Activated T-helper 1 cell treated with anti-CD3 and anti-CD28 coated beads, Interleukin-12 subunit alpha, Interleukin-12 subunit beta, Interleukin-2, Interleukin-4 antibody, amounts not matched to agents 30 ng/mL and 10 ng/mL and 1 ng/mL, durations not matched to agents 14 hours and 24 hours and 36 hours (primary cell): ENCODE measurements at regions of chr9 and their contacts with region 1.

Region 1: DNA sequence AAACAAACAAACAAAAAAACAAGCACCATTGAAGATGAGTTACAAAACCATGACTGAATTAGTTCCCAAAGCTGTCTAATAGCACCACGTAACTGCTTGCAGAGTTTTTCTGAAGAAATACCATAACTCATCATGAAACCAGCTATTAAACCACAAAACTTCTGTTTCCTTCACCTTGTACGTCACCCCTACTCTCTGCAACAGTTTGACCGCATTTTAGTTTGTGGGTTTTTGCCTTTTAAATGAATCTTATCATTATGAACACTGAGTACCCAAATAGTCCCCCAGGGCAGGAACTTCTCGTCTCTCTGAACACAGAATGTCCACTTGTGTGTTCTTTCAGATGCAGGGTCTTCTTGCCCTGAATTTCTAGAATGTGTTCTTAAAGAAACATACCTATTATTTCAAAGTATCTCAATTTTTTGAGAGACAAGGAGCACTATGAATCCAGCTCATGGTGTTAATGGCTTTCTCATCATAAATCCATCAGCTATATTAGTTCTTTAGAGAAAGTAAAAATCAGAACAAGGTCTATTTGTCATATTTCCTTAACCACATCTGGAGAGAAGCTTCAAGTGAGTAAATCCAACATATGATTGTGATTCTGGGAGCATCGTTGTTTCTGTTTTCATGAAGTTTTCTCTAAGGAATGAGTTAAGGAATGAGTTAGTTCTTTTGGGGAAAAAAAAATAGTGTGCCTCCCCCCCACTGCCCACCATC is 210.6 kb downstream of the AUH start:
- DNase-seq: peak; percentile 70
- H3K4me3 Mint-ChIP-seq: peak overlapping the region; percentile 13
- H3K27ac Mint-ChIP-seq: peak overlapping the region; percentile 94
- H3K4me1 Mint-ChIP-seq: peaks cover 95% of the 10 kb centered on the region
- H3K27me3 Mint-ChIP-seq: no peaks in the 10 kb centered on the region

Region 2: DNA sequence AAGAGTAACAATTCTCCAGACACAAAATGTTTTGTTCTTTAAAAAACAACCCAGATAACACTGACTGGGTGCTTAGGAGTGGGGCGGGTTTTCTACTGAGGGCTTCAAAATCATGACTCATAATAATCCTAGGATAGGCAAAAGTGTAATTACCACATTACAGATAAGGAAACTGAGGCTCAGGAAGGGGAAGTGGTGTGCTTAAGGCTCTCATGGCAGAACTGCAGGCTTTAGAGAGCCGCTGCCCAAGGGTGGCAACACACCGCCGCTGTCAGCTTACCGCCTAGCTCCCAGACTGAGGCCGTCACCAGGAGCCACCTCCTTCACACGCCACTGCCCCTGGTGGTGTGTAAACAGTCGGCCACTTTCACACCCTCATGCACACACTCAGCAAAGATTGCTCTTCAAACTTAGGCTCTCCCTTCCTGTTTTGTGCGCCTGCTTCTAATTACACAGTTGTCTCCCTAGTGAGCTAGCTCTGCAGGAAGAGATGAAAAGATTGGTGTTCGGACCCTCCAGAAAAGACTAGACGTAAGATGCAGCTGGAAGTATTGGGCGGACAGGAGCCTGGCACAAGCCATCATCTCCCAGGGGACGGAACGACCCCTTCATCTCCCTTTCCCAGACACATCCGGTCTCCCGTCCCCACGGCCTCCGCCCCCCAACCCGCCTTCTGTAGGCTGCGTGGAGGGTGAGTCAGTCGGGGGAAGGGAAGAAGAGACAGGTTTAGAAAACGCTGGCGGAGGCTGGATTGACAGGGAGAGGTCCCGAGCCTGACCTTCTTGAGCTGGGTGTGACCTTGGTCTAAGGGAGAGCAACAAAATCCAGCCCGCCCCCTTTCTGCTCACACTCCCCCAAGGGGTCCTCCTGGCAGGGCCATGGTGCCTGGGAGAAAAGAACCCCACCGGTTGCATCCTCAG is 186.8 kb before region 1 on chr9:
- intact Hi-C with region 1: loop called (anchors 5 kb)
- DNase-seq: no peak
- H3K4me3 Mint-ChIP-seq: no peak overlapping the region
- H3K27ac Mint-ChIP-seq: no peak overlapping the region
- H3K4me1 Mint-ChIP-seq: peaks cover 46% of the 10 kb centered on the region
- H3K27me3 Mint-ChIP-seq: peaks cover 9% of the 10 kb centered on the region

Region 3: DNA sequence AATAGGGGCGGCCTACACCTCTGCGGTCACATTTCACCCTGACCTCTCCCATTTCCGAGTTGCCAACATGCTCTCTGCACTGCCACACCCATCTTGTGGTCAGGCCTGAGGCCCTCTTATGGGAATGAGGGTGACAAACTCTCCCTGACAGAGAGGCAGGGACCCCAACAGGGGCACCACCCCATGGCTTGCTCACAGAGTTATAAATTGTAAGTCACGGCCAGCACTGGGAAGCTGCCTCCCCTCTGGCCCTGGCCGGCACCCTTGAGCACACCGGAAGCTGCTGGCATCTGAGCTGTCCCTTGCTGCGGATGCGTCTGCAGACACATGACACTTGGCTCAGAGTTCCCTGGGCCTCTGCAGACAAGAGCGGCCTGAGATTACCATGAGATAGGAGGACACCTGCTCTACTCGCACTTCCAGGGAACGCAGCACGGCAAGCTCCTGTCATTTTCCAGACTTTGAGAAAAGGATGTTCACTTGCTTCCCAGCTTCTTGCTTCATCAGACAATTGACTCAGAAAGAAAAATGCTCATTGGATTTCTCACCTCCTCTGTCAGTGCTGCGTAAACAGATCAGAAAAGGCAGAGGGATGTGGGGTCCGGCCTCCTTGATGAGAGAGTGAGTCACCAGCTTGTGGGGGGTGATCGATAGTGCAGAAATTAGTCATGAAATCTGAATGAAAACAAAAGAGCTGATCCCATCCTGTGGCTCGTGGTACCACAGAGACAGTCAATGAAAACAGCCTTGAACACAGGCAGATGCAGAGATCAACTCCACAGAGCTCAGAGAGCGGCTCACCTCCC is 79.8 kb before region 1 on chr9:
- intact Hi-C with region 1: loop called (anchors 1 kb)
- DNase-seq: peak; percentile 35
- H3K4me3 Mint-ChIP-seq: peak overlapping the region; percentile 68
- H3K27ac Mint-ChIP-seq: peak overlapping the region; percentile 96
- H3K4me1 Mint-ChIP-seq: peaks cover 17% of the 10 kb centered on the region
- H3K27me3 Mint-ChIP-seq: peaks cover 2% of the 10 kb centered on the region

Region 4: DNA sequence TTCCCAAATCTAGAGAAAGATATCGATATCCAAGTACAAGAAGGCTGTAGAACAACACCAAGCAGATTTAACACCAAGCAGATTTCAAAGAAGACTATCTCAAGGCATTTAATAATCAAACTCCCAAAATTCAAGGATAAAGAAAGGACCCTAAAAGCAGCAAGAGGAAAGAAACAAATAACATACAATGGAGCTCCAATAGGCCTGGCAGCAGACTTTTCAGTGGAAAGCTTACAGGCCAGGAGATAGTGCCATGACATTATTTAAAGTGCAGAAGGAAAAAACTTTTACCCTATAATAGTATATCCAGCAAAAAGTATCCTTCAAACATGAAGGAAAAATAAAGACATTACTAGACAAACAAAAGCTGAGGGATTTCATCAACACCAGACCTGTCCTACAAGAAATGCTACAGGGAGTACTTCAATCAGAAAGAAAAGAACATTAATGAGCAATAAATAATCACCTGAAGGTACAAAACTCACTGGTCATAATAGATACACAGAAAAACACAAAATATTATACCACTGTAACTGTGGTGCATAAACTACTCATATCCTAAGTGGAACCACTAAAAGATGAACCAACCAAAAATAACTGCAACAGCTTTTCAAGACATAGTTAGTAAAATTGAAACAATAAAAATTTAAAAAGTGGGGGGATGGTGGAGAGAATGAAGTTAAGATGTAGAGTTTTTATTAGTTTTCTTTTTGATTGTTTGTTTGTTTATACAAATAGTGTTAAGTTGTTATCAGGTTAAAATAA is 56.7 kb before region 1 on chr9:
- intact Hi-C with region 1: no loop called
- DNase-seq: no peak
- H3K4me3 Mint-ChIP-seq: no peak overlapping the region
- H3K27ac Mint-ChIP-seq: peak overlapping the region; percentile 46
- H3K4me1 Mint-ChIP-seq: peaks cover 54% of the 10 kb centered on the region
- H3K27me3 Mint-ChIP-seq: peaks cover 2% of the 10 kb centered on the region

Region 5: GRCh38 chr9:91164724-91165520 is 13.8 kb after region 1 on chr9:
- intact Hi-C with region 1: loop called (anchors 1 kb)
- DNase-seq: peak; percentile 74
- H3K4me3 Mint-ChIP-seq: peak overlapping the region; percentile 82
- H3K27ac Mint-ChIP-seq: peak overlapping the region; percentile 98
- H3K4me1 Mint-ChIP-seq: peaks cover 62% of the 10 kb centered on the region
- H3K27me3 Mint-ChIP-seq: no peaks in the 10 kb centered on the region

Region 6: DNA sequence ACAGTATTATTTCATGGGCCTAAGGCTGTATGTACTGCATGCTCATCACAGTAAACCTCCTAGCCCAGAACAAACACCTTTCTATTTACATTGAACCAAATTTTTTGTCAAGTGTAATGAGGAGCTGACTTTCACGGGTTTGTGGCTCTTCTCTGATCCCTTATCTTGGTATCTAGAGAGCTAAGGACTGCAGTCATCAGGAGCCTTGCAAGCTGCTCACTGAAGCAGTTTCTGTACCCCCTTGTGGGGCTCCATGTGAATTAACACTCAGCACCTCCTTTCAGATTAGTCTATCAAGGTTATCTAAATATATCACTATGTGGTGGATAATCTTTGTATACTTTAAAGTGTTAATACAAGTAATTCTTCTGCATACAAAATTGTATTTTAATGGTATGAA is 102.3 kb after region 1 on chr9:
- intact Hi-C with region 1: loop called (anchors 1 kb)
- DNase-seq: peak; percentile 51
- H3K4me3 Mint-ChIP-seq: no peak overlapping the region
- H3K27ac Mint-ChIP-seq: no peak overlapping the region
- H3K4me1 Mint-ChIP-seq: peaks cover 62% of the 10 kb centered on the region
- H3K27me3 Mint-ChIP-seq: no peaks in the 10 kb centered on the region

Region 7: DNA sequence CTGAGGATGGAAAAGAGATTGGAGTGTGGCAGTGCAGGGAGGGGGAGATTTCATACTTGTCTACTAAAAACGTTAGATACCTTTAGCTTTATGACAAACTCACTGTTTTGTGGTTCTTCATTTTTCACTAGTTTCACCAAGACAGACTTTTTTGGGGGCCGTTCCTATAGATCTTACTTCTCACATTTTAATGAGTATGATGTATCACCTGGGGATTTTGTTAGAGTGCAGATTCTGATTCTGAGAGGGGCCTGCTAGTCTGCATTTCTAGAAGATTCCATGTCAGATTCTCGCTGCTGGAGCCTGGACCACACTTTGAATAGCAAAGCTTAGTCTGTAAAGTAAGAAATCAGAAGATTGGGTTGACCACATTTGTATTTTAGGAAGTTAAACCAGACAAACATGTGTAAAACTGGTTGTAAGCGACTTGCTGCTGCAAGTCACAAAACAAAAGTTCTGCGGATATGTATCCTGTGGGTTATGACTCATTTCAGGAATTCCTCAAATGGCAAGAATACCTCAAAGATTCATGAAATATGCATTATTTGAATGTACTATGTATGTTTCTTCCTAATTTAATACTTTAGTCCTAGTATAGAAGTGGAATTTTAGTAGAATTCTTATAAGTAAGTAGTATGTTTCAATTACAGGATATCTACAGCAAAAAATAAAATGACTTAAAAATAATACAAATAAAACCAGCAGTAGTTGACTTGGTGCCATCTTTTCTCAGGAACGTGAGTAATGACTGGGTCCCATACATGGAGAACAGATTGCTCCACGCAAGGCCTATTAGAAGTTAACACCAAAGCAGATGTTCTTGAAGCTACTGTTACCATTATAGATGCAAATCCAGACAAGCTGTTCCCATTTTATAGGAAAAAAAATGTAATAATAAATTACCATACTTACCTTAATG is 244.7 kb after region 1 on chr9:
- intact Hi-C with region 1: loop called (anchors 1 kb)
- DNase-seq: peak; percentile 33
- H3K4me3 Mint-ChIP-seq: peak overlapping the region; percentile 73
- H3K27ac Mint-ChIP-seq: peak overlapping the region; percentile 84
- H3K4me1 Mint-ChIP-seq: peaks cover 21% of the 10 kb centered on the region
- H3K27me3 Mint-ChIP-seq: peaks cover 11% of the 10 kb centered on the region